MCF 10A (cell line): ENCODE measurements at regions of chr5 and their contacts with region 1.

Region 1: DNA sequence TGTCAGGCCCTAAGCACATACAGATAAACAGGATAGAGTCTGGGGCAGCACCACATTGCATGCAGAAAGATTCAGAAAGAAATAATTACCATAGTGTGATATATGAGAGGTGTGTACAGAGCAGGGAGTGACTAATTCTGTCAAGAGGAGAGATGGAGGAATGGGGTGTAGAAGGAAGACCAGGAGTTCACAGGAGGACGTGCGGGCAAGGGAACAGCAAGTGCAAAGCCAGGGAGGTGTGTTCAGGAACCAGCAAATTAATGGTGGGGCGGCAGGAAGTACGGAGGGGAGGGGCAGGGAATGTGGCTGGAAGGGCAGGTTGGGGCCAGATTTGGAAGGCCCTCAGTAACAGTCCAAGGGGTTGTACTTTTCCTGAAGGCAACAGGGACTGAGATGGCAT is 17.4 kb downstream of the EGR1 start:
- DNase-seq: peak; percentile 59
- H3K4me3 Mint-ChIP-seq: no peak overlapping the region
- H3K27ac Mint-ChIP-seq: peak overlapping the region; percentile 2
- H3K4me1 Mint-ChIP-seq: peaks cover 17% of the 10 kb centered on the region
- H3K27me3 Mint-ChIP-seq: no peaks in the 10 kb centered on the region
- CTCF ChIP-seq: no peak

Region 2: GRCh38 chr5:138402640-138403039 is 80.0 kb before region 1 on chr5:
- CTCF ChIA-PET with region 1: no interaction called
- POLR2A ChIA-PET with region 1: no interaction called
- intact Hi-C with region 1: no loop called
- DNase-seq: no peak
- H3K4me3 Mint-ChIP-seq: no peak overlapping the region
- H3K27ac Mint-ChIP-seq: no peak overlapping the region
- H3K4me1 Mint-ChIP-seq: peaks cover 5% of the 10 kb centered on the region
- H3K27me3 Mint-ChIP-seq: no peaks in the 10 kb centered on the region
- CTCF ChIP-seq: no peak

Region 3: DNA sequence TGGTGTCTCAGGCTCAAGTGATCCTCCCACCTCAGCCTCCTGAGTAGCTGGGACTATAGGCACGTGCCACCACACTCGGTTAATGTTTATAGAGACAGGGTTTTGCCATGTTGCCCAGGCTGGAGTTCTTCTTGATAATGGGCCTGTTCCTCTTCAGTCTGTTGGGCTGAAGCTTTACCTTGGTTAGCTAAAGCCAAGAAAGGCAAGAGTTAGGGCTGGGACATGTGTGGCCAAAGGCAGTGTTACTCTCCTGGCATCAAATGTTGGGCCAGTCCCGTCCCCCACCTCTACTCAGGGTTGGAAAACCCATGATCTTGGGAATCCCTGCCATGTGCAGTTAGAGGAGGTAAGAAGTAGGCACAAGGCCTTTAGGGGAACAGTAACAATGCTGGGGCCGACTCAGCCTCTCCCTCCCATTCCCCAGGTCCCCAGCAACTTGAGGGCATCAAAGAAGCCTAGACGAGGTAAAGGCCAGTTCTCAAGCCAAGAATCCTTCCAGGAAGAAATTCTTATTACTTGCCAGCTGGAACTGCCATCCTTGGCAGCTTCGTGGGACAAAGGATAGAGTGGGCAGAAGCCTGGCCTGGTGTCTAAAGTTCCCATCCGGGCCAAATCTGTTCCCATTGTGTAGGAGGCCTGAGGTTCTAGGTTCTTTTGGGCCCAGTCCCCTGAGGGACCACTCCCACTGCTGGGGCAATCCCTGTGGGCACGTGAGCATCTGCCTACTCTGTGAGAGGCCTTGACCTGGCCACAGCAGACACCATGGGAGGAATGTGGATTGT is 12.9 kb before region 1 on chr5:
- CTCF ChIA-PET with region 1: interaction called, 16 read pairs
- POLR2A ChIA-PET with region 1: interaction called, 32 read pairs
- intact Hi-C with region 1: no loop called
- DNase-seq: peak; percentile 78
- H3K4me3 Mint-ChIP-seq: no peak overlapping the region
- H3K27ac Mint-ChIP-seq: peak overlapping the region; percentile 93
- H3K4me1 Mint-ChIP-seq: peaks cover 35% of the 10 kb centered on the region
- H3K27me3 Mint-ChIP-seq: peaks cover 20% of the 10 kb centered on the region
- CTCF ChIP-seq: no peak

Region 4: DNA sequence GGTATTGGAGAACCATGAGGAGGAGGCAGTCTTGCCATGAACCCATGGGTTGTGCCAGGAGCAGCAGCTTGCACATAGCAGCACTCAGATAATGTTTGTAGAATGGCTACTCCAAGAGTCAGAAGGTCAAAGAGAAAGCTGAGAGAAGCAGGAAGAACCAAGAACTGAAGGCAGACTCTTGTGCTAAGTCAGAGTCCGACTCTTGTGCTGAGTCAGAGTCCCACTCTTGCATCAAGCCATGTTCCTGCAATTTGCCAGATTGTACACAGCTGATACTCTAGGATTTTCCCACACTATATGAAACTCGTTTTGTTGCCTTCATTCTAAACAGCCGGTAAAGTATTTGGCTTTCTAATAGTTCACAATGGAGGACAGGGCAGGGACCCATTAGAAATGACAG is 118.8 kb after region 1 on chr5:
- CTCF ChIA-PET with region 1: no interaction called
- POLR2A ChIA-PET with region 1: no interaction called
- intact Hi-C with region 1: no loop called
- DNase-seq: peak; percentile 61
- H3K4me3 Mint-ChIP-seq: no peak overlapping the region
- H3K27ac Mint-ChIP-seq: no peak overlapping the region
- H3K4me1 Mint-ChIP-seq: peaks cover 11% of the 10 kb centered on the region
- H3K27me3 Mint-ChIP-seq: no peaks in the 10 kb centered on the region
- CTCF ChIP-seq: no peak

Region 5: DNA sequence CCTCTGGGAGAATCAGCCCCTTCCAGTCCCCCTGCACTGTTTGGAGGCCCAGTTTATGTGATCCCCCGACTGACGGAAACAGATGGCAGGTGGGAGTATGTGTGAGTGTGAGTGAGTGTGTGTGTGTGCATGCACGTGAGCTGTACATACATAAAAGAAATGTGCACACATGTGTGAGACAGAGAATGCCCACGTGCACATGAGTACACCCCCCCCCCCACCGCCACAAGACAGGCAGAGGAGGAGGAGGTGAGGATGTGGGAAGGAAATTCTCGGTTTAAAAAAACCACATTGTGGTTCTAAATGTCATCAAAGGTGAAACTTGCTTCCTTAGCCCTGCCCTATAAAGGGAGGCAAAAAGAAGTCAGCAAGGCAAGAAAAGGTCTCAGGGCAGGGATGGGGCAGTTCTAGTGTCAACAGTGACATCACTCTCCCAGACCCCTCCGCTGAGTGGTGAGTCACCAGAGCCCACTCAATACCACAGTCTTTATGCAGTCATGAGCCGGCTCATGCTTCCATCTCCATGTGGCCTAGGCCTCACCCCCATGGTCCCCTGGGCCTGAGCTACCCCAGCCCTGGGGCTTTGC is 171.7 kb after region 1 on chr5:
- CTCF ChIA-PET with region 1: no interaction called
- POLR2A ChIA-PET with region 1: no interaction called
- intact Hi-C with region 1: no loop called
- DNase-seq: no peak
- H3K4me3 Mint-ChIP-seq: no peak overlapping the region
- H3K27ac Mint-ChIP-seq: no peak overlapping the region
- H3K4me1 Mint-ChIP-seq: no peaks in the 10 kb centered on the region
- H3K27me3 Mint-ChIP-seq: no peaks in the 10 kb centered on the region
- CTCF ChIP-seq: no peak